ENCODE measurements at regions of chr11 and their contacts with region 1.

Region 1: GRCh38 chr11:43680521-43681400 is at the start of gene HSD17B12:
- DNase-seq: peak; percentile 99
- ATAC-seq: peak; percentile 100
- H3K4me3 ChIP-seq: peak within 1 kb of the TSS; percentile 59 to 99 (median 90)
- H3K27ac ChIP-seq: peak within 1 kb of the TSS; percentile 42 to 97 (median 94)
- H3K4me1 ChIP-seq: peaks cover 0 to 50% (median 38%) of the 10 kb centered on the region in 9 donors
- H3K27me3 ChIP-seq: no peaks in the 10 kb centered on the region
- CTCF ChIP-seq: peak in 3 of 9 donors; percentile 8 to 19 (median 17)
- total RNA-seq, gene HSD17B12: 66.7 to 122 (median 87.4) TPM

Region 2: GRCh38 chr11:43643898-43644620 is 36.7 kb before region 1 on chr11:
- intact Hi-C with region 1: loop called in 3 of 10 experiments (anchors 1 to 5 kb)
- DNase-seq: peak; percentile 85 to 87
- ATAC-seq: peak; percentile 99 to 100 (median 100)
- H3K4me3 ChIP-seq: peak overlapping the region; percentile 65 to 95 (median 88)
- H3K27ac ChIP-seq: peak overlapping the region in 9 of 10 donors; percentile 69 to 92 (median 82)
- H3K4me1 ChIP-seq: peaks cover 3 to 18% (median 15%) of the 10 kb centered on the region in 9 donors
- H3K27me3 ChIP-seq: peaks cover 5 to 40% (median 30%) of the 10 kb centered on the region in 7 donors
- CTCF ChIP-seq: peak in 2 of 9 donors; percentile 9 to 21

Region 3: DNA sequence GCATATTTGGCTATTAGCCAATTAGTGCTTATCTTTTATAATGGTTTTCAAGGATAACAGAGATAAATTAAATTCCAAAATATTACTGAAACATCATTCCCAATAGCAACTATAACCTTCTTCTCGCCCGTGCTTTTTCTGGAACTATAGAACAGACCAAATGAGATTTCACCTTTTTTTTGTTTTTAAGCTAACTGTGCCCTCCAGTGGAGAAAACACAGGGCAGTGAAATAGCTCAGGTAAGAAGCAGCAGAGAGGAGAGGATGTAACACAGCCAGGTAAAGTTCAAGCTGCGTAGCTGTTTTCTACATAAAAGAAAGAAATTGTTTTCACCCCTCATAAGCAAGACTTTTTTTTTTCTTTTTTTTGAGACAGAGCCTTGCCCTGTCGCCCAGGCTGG is 28.0 kb after region 1 on chr11:
- intact Hi-C with region 1: no loop called
- DNase-seq: no peak
- ATAC-seq: no peak
- H3K4me3 ChIP-seq: no peak overlapping the region
- H3K27ac ChIP-seq: no peak overlapping the region
- H3K4me1 ChIP-seq: peaks cover 0 to 3% (median 0%) of the 10 kb centered on the region in 9 donors
- H3K27me3 ChIP-seq: no peaks in the 10 kb centered on the region
- CTCF ChIP-seq: peak in 8 of 9 donors; percentile 15 to 64 (median 50)

Region 4: GRCh38 chr11:43738590-43739409 is 58.0 kb after region 1 on chr11:
- intact Hi-C with region 1: loop called in 2 of 10 experiments (anchors 5 to 10 kb)
- DNase-seq: peak in 1 of 2 donors; percentile 42
- ATAC-seq: peak; percentile 80 to 89 (median 85)
- H3K4me3 ChIP-seq: peak overlapping the region in 5 of 10 donors; percentile 0 to 29 (median 12)
- H3K27ac ChIP-seq: peak overlapping the region in 8 of 10 donors; percentile 37 to 86 (median 80)
- H3K4me1 ChIP-seq: peaks cover 9 to 50% (median 43%) of the 10 kb centered on the region in 9 donors
- H3K27me3 ChIP-seq: no peaks in the 10 kb centered on the region
- CTCF ChIP-seq: no peak

Region 5: DNA sequence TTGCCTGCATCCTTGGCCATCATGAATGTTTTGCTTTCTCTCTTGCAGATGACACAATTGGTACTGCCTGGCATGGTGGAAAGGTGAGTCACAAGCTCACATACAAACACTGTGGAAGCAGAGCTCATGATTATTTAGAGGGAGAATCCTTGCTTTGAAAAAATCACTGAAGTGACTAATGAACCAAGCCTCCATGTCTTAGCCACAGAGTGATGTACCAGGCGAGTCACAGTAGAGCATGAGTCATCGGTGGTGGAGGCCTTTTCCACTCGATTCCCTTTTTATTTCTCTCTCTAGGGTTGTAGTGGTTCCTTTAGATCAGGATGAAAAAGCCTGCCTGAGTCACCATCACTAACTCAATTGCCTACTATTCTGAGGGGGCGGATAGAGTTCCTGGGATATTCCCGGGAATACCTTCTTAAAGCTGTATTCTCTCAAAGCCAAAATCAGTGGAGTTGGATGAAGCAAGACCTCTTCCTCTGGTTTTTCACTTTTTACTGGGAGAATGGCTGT is 150.2 kb after region 1 on chr11:
- intact Hi-C with region 1: loop called in 1 of 10 experiments (anchors 10 kb)
- DNase-seq: no peak
- ATAC-seq: peak in 5 of 8 donors; percentile 38 to 89 (median 75)
- H3K4me3 ChIP-seq: no peak overlapping the region
- H3K27ac ChIP-seq: peak overlapping the region in 1 of 10 donors; percentile 6
- H3K4me1 ChIP-seq: peaks cover 0 to 28% (median 6%) of the 10 kb centered on the region in 9 donors
- H3K27me3 ChIP-seq: no peaks in the 10 kb centered on the region
- CTCF ChIP-seq: no peak

Measured in heart right ventricle (tissue), 16 donors.